ENCODE measurements at regions of chr22 and their contacts with region 1.

Region 1: DNA sequence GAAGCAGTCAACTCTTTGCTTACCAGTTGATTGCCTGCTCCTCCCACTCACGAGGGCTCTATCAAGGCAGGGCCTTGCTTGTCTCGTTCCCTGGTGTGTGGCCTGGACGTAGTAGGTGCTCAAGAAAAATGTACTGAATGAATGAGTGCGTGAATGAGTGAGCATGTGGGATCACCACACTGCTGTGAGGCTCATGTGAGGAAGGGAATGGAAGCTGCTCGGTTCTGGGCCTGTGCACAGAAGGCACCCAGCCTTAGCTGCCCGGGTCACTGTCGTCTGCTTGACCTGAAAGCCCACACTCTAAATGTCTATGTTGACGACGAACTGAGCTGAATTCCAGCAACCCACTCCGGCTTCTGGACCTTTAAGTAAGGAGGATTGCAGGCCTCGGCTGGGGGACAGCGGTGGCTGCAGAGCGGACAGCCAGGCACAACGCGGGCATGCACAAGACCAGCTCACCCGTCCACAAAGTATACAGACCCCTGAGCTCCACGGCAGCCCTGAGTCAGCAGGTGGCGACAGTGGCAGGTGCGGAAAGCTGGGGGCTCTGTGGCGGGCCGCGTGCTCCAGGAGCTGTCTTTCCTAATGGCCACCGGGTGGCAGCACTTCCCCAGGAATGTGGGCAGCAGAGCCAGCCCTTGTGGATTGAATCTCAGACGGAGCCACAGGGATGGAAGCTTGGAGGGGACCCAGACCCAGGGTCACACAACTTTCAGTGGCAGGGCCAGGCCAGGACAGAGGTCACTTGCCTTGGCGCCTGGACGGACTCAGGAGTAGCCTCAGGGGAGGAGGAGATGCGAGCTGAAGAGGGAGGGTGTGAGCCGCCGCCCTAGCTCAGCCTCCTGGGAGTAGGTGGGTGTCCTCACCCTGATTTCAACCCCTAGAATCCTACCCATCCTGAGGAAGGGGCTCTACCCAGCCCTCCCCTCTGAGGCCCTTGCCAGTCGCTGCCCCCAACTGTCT is 5.0 kb upstream of the PICK1 start:
- DNase-seq: peak; percentile 30
- H3K4me3 ChIP-seq: no peak overlapping the region
- H3K27ac ChIP-seq: no peak overlapping the region
- H3K27me3 ChIP-seq: peaks cover 4% of the 10 kb centered on the region
- CTCF ChIP-seq: peak; percentile 73

Region 2: DNA sequence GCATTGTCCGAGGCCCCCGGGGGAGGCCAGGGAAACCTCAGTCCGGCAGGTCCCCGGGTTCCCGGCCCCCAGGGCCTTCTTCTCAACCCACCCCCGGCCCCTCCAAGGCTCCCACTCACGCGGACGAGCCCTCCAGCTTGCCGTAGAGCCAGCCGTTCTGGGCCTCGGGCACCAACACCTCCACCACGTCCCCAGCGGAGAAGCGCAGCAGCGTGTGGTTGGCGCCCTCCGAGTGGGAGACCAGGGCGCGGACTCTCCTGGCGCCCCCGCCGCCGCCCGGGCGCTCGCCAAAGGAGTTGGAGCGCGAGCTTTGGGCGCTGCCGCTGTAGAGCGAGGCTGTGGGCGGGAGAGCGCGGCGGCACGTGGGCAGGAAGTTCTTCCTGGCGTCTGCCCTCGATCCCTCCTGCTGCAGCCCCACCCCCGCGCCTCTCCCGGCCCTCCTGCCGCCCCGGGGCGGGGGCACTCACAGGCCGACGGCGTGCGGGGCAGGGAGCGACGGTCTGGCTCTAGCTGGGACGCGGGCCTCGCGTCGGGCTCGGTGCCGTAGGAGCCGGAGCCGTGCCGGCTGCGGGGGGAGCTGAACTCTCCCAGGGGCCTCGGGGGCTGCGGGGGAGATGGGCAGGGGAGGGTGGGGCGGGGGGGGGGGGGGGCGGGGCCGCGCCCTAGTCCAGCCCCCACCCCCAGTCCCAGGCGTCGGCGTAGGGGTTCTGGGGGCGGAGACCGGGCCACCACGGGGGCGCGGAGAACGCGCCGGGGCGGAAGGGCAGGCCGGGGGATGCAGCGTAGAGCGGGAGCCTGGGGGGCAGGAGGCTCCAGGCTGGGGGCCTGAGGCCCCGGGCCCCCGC is 36.7 kb after region 1 on chr22:
- CTCF ChIA-PET with region 1: interaction called, 10 read pairs
- POLR2A ChIA-PET with region 1: no interaction called
- DNase-seq: no peak
- H3K4me3 ChIP-seq: peak overlapping the region; percentile 13; the same call in 1 of the 2 replicates
- H3K27ac ChIP-seq: no peak overlapping the region
- H3K27me3 ChIP-seq: peaks cover 34% of the 10 kb centered on the region
- CTCF ChIP-seq: no peak

Region 3: GRCh38 chr22:38124236-38124974 is 72.2 kb after region 1 on chr22:
- CTCF ChIA-PET with region 1: no interaction called
- POLR2A ChIA-PET with region 1: no interaction called
- DNase-seq: no peak
- H3K4me3 ChIP-seq: no peak overlapping the region
- H3K27ac ChIP-seq: no peak overlapping the region
- H3K27me3 ChIP-seq: peaks cover 4% of the 10 kb centered on the region
- CTCF ChIP-seq: no peak

Region 4: GRCh38 chr22:38353142-38353629 is 301.0 kb after region 1 on chr22:
- CTCF ChIA-PET with region 1: interaction called, 10 read pairs
- POLR2A ChIA-PET with region 1: no interaction called
- DNase-seq: no peak
- H3K4me3 ChIP-seq: no peak overlapping the region
- H3K27ac ChIP-seq: no peak overlapping the region
- H3K27me3 ChIP-seq: no peaks in the 10 kb centered on the region
- CTCF ChIP-seq: peak; percentile 85

Region 5: GRCh38 chr22:38569972-38570778 is 518.0 kb after region 1 on chr22 and contains the start of gene DMC1:
- CTCF ChIA-PET with region 1: interaction called, 23 read pairs
- POLR2A ChIA-PET with region 1: no interaction called
- DNase-seq: no peak
- H3K4me3 ChIP-seq: peak within 1 kb of the TSS; percentile 76
- H3K27ac ChIP-seq: peak within 1 kb of the TSS; percentile 13
- H3K27me3 ChIP-seq: peaks cover 2% of the 10 kb centered on the region
- CTCF ChIP-seq: no peak
- polyA plus RNA-seq, gene DMC1: 0.29 and 0.89 TPM in 2 replicates

Measured in AG04450 (cell line).